ENCODE measurements at regions of chr1 and their contacts with region 1.

Region 1: GRCh38 chr1:218171285-218171893 is 113.7 kb upstream of the RRP15 start:
- DNase-seq: peak; percentile 68
- H3K4me3 Mint-ChIP-seq: no peak overlapping the region
- H3K27ac Mint-ChIP-seq: no peak overlapping the region
- H3K4me1 Mint-ChIP-seq: peaks cover 4% of the 10 kb centered on the region
- H3K27me3 Mint-ChIP-seq: peaks cover 89% of the 10 kb centered on the region
- CTCF ChIP-seq: peak; percentile 95

Region 2: GRCh38 chr1:216580538-216581057 is 1590.8 kb before region 1 on chr1:
- CTCF ChIA-PET with region 1: no interaction called
- POLR2A ChIA-PET with region 1: no interaction called
- intact Hi-C with region 1: loop called (anchors 10 kb)
- DNase-seq: no peak
- H3K4me3 Mint-ChIP-seq: no peak overlapping the region
- H3K27ac Mint-ChIP-seq: no peak overlapping the region
- H3K4me1 Mint-ChIP-seq: no peaks in the 10 kb centered on the region
- H3K27me3 Mint-ChIP-seq: peaks cover 85% of the 10 kb centered on the region
- CTCF ChIP-seq: no peak

Region 3: DNA sequence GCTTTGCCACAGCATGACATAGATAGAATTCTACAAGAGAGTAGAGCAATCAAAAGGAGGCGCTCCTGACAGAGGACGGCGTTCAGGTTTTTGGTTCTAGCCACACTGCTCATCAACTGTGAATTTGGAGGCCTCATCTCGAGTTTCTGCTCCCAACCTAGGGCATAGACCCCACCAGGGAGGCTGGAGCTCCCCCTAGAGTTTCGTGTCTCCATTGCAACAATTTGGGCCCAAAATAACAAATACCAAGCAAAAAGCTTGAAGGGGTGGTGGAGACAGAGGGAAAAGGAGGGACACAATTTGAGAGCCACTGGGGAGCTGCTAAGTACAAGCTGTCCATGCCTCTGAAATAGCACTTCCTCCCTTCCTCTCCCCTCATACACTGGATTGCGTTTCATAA is 837.5 kb before region 1 on chr1:
- CTCF ChIA-PET with region 1: no interaction called
- POLR2A ChIA-PET with region 1: no interaction called
- intact Hi-C with region 1: loop called (anchors 5 kb)
- DNase-seq: peak; percentile 79
- H3K4me3 Mint-ChIP-seq: no peak overlapping the region
- H3K27ac Mint-ChIP-seq: no peak overlapping the region
- H3K4me1 Mint-ChIP-seq: no peaks in the 10 kb centered on the region
- H3K27me3 Mint-ChIP-seq: peaks cover 5% of the 10 kb centered on the region
- CTCF ChIP-seq: peak; percentile 91

Region 4: DNA sequence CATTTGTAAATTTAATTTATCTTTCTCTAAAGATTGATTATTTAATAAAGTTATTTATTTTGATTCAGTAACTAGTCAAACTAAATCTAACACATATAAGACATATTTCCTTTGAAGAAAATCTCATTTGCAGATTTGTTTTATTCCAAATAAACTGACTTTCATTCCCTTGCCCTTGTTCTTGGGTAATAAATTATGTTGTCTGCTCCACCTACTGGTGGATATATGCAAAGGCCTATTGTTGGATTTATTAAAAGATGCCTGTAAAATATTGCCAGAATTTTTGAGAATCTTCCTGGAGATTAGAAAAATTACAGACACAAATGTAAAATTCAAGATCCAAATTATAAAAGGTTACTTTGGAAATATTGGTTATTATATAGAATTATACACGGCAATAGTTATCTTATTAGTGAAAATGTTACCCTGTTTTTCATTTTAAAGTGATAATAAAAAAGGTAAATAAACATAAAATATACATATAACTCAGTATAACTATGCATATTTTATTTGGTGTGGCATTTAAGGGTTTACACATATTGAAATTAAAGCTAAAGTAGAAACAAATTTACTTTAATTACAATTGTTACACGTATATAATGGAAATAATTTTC is 424.1 kb before region 1 on chr1:
- CTCF ChIA-PET with region 1: no interaction called
- POLR2A ChIA-PET with region 1: no interaction called
- intact Hi-C with region 1: loop called (anchors 5 kb)
- DNase-seq: peak; percentile 66
- H3K4me3 Mint-ChIP-seq: no peak overlapping the region
- H3K27ac Mint-ChIP-seq: no peak overlapping the region
- H3K4me1 Mint-ChIP-seq: no peaks in the 10 kb centered on the region
- H3K27me3 Mint-ChIP-seq: no peaks in the 10 kb centered on the region
- CTCF ChIP-seq: peak; percentile 93